K562 (cell line): ENCODE measurements at regions of chr2 and their contacts with region 1.

Region 1: DNA sequence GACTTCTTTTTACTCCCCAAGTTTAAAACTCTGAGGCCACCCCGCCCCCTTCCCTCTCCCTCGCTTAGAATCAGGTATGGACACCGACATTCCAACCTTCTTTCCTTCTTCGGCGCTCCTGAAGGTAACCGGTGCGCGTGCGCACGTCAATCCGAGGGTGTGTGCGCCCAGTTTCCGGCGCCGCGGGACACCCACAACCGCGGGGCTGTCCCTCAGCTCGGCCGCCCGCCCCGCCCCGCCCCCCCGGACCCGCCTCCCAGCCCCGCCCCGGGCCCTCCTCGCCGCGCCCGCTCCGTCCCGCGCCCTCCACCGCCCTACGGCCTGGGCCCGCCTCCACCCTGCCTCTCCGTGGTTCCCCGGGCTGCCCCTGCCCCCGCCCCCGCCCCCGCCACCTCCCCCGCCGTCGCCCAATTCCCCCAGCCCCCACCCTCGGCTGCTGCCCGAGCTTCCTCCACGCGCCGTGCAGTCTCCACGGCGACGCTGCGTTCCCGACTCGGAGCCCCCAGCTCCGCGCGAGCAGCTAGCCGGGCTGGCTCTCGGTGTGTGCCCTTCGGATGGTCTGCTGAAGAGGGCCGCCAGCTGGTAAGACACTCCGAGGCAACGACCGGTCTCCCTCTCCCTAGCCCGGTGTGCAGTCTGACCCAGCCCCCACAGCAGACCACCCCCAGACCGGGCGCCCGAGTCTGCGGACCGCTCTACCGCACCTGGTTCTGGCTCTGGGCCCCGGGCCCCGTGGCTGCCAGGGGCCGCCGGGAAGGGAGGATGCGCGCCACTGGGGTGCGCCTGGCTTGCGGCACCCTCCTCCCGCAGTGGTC is 635 bp downstream of the ERICH2 start:
- DNase-seq: peak; percentile 94 to 98 (median 98)
- ATAC-seq: peak; percentile 92
- H3K4me3 ChIP-seq: peak overlapping the region; percentile 81
- H3K27ac ChIP-seq: peak overlapping the region; percentile 95
- H3K4me1 ChIP-seq: peaks cover 7 to 19% of the 10 kb centered on the region in 2 experiments
- H3K27me3 ChIP-seq: no peaks in the 10 kb centered on the region
- CTCF ChIP-seq: peak in 2 of 3 experiments; percentile 4 to 20; a peak in 2 of 6 replicates
- EP300 ChIP-seq: no peak; the same call in 1 of the 2 replicates
- POLR2A ChIP-seq: peak; percentile 84
- RAD21 ChIP-seq: peak; percentile 4 to 25; a peak in 1 of 4 replicates

Region 2: GRCh38 chr2:170747921-170748320 is 22.9 kb before region 1 on chr2:
- CTCF ChIA-PET with region 1: no interaction called
- POLR2A ChIA-PET with region 1: interaction called, 10 read pairs
- in situ Hi-C with region 1: no loop called
- intact Hi-C with region 1: loop called (anchors 2 kb)
- DNase-seq: peak; percentile 38 to 68 (median 57)
- ATAC-seq: peak; percentile 63
- H3K4me3 ChIP-seq: no peak overlapping the region
- H3K27ac ChIP-seq: peak overlapping the region; percentile 10; the same call in 2 of the 3 replicates
- H3K4me1 ChIP-seq: peaks cover 17 to 37% of the 10 kb centered on the region in 2 experiments; a peak in 4 of 5 replicates
- H3K27me3 ChIP-seq: no peaks in the 10 kb centered on the region
- CTCF ChIP-seq: no peak
- EP300 ChIP-seq: no peak; the same call in 1 of the 2 replicates
- POLR2A ChIP-seq: no peak
- RAD21 ChIP-seq: no peak

Region 3: DNA sequence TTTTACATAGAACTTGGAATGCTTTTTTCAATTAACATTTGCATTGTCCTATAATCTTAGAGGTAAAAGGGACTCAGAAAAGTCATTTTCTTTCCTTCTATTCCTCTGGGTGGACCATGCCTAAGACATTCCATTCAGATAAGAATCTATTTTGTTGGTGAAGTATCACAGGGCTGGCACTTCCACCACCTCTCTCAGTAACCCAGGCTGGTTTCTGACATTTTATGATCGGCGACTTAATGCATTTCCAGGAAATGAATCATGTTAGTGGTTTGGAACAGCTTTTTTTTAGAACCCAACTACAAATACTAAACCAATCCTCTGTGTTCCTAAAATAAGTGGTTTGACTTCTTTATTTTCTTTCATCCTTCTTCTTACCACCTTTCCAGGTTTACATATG is 72.8 kb after region 1 on chr2:
- CTCF ChIA-PET with region 1: no interaction called
- POLR2A ChIA-PET with region 1: no interaction called
- in situ Hi-C with region 1: no loop called
- intact Hi-C with region 1: no loop called
- DNase-seq: no peak
- ATAC-seq: no peak
- H3K4me3 ChIP-seq: no peak overlapping the region
- H3K27ac ChIP-seq: no peak overlapping the region
- H3K4me1 ChIP-seq: peaks cover 0 to 3% of the 10 kb centered on the region in 2 experiments; a peak in 1 of 5 replicates
- H3K27me3 ChIP-seq: no peaks in the 10 kb centered on the region
- CTCF ChIP-seq: no peak
- EP300 ChIP-seq: no peak
- POLR2A ChIP-seq: no peak
- RAD21 ChIP-seq: no peak

Region 4: DNA sequence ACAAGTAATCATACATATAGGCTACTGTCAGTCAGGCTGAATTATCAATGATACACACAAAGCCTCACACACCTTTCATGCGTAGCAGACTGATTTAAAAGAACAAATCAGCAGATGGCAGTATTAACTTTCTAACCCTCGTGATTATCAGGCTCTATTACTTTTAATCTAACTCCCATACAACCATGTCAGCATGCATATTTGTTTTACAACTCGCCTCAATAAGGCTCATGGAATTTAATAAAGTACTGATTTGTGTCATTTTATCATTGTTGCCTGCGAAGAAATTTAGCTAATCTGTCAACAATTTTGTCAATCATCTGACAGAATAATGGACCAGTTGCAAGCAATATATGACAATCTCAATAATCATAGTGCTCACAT is 1040.4 kb after region 1 on chr2:
- CTCF ChIA-PET with region 1: no interaction called
- POLR2A ChIA-PET with region 1: no interaction called
- in situ Hi-C with region 1: no loop called
- intact Hi-C with region 1: no loop called
- DNase-seq: peak in 1 of 4 experiments; percentile 37
- ATAC-seq: peak; percentile 77
- H3K4me3 ChIP-seq: no peak overlapping the region
- H3K27ac ChIP-seq: no peak overlapping the region
- H3K4me1 ChIP-seq: no peaks in the 10 kb centered on the region
- H3K27me3 ChIP-seq: no peaks in the 10 kb centered on the region
- CTCF ChIP-seq: peak; percentile 45 to 81 (median 56)
- EP300 ChIP-seq: no peak
- POLR2A ChIP-seq: no peak
- RAD21 ChIP-seq: peak; percentile 91 to 97